ENCODE measurements at regions of chr20 and their contacts with region 1.

Region 1: GRCh38 chr20:2688041-2688591 is 4.5 kb upstream of the EBF4 start:
- DNase-seq: peak in 7 of 10 donors; percentile 43 to 77 (median 57)
- H3K4me3 ChIP-seq: peak overlapping the region in 2 of 59 donors; percentile 1 to 2
- H3K27ac ChIP-seq: no peak overlapping the region
- H3K27me3 ChIP-seq: peaks cover 0 to 6% (median 0%) of the 10 kb centered on the region in 45 donors
- CTCF ChIP-seq: peak; percentile 14 to 87 (median 70)

Region 2: DNA sequence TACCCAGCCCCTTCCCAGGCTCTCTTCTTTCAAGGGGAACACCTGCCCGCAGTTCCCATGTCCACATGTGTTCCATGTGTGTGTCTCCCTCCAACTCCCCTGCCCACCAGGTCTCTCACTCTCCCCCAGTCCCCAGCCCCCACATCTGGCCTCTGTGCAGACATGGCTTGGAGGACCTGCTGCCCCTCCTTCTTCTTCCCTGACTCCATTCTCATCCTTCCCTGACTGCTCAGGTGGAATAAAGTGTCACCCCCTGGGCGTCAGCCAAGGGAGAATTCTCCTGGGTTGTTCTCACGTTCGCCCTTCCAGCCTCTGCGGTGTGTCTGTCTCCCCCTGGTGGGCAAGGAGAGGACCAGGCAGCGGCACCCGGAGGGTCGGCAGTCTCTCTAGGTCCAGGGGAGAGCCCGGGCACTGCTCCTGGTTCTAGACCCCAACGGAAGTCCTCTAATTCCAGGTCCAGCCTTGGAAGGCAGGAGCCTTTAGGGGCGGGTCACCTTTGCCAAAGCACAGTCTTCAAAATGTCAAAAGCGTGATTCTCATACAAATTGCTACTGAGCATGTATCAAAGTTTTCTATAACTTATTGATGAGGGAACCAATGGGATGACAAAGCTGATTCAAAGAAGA is 54.9 kb after region 1 on chr20:
- intact Hi-C with region 1: loop called in 1 of 2 experiments (anchors 2 kb)
- DNase-seq: peak in 2 of 10 donors; percentile 31 to 56
- H3K4me3 ChIP-seq: no peak overlapping the region
- H3K27ac ChIP-seq: no peak overlapping the region
- H3K27me3 ChIP-seq: peaks cover 0 to 6% (median 0%) of the 10 kb centered on the region in 45 donors
- CTCF ChIP-seq: peak in 55 of 56 donors; percentile 23 to 81 (median 69)

Region 3: DNA sequence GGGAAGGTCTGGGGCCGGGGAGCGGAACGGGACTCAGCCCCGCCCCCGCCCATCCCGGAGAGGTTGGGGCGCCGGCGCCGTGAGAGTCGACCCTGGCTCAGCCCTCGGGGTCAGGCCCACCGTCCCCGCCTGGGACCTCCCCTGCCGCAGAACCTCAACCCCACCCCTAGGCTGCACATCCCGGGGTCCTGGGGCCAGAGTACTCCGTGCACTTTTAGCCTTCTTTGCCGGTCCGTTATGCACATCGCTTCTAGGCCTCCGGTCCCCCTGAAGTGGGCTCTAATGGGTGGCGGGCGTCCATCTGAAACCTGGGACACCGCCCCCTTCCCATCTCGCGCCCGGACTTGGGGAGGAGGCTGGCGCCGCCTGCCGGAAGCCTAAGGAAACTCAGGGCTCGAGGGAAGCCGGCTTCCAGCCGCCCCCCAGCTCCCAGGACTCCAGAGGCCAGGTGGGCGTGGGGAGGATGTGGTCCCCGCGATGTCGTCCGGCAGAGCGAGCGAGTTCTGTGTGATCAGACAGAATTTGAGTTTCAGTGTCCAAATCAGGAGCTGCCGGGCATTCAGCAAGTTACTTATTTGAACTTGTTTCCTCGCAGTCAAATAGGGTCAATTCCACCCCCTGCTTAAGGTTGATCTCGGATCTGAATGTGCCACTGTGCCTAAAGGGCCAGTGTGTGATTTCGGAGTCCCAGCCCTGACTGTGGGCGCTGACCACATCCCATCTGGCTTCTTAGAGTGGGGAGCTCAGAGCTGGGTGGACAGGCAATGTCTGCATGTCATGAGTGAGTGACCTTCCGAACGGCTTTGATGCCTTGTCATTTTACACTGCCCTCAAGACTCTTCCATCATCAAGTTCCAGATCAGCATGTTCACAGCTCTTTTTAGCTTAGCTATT is 64.7 kb after region 1 on chr20:
- intact Hi-C with region 1: loop called in 1 of 2 experiments (anchors 5 kb)
- DNase-seq: no peak
- H3K4me3 ChIP-seq: peak overlapping the region in 55 of 59 donors; percentile 10 to 60 (median 40)
- H3K27ac ChIP-seq: no peak overlapping the region
- H3K27me3 ChIP-seq: peaks cover 0 to 68% (median 25%) of the 10 kb centered on the region in 45 donors
- CTCF ChIP-seq: peak in 51 of 56 donors; percentile 24 to 68 (median 49)

Region 4: DNA sequence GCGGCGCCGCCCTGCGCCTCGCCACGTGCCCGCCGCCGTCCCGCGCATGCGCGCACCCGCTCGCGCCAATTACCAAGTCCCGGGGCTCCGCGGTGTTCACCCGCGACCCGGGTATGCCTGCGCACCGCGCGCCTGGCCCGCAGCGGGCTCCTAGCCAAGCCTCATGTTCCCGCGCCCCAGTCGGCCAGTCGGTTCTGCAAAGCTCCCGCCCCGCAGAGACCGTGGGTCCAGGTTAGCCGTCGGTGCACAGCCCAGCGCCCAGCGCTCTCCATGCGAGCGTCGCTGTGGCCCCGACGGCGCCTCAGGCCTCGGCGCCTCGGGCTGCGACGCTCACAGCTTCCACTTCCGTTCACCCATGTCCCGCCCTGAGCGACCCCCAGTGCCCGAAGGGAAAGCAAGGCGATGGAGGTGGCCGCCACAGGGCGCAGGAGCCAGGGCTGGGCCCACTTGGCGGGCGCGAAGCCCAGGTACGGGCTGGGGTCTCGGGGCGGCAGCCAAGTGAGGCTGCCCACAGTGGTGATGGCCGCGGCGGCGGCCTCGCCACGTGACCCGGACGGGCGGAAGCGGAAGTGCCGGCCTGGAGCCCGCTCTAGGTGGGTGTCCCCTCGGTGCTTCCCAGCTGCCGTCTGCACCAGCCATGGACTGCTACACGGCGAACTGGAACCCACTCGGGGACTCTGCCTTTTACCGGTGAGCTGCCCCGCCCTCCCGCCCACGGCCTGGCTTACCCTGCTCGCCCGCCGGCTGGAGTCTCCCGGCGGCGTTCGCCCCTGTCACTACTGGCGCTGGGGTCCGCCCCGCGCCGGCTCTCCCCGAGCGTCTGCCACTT is 152.2 kb after region 1 on chr20 and contains the starts of genes PCED1A and VPS16:
- intact Hi-C with region 1: loop called (anchors 5 to 10 kb)
- DNase-seq: peak; percentile 84 to 97 (median 90)
- H3K4me3 ChIP-seq: peak within 1 kb of the TSS; percentile 70 to 99 (median 94)
- H3K27ac ChIP-seq: peak within 1 kb of the TSS; percentile 47 to 96 (median 89)
- H3K27me3 ChIP-seq: no peaks in the 10 kb centered on the region
- CTCF ChIP-seq: peak in 27 of 56 donors; percentile 7 to 58 (median 26)
- total RNA-seq, gene PCED1A: 27.4 to 60.4 (median 43.4) TPM
- total RNA-seq, gene VPS16: 39.8 to 69.6 (median 52.0) TPM